CD4-positive, alpha-beta memory T cell (primary cell): ENCODE measurements at regions of chr4 and their contacts with region 1.

Region 1: DNA sequence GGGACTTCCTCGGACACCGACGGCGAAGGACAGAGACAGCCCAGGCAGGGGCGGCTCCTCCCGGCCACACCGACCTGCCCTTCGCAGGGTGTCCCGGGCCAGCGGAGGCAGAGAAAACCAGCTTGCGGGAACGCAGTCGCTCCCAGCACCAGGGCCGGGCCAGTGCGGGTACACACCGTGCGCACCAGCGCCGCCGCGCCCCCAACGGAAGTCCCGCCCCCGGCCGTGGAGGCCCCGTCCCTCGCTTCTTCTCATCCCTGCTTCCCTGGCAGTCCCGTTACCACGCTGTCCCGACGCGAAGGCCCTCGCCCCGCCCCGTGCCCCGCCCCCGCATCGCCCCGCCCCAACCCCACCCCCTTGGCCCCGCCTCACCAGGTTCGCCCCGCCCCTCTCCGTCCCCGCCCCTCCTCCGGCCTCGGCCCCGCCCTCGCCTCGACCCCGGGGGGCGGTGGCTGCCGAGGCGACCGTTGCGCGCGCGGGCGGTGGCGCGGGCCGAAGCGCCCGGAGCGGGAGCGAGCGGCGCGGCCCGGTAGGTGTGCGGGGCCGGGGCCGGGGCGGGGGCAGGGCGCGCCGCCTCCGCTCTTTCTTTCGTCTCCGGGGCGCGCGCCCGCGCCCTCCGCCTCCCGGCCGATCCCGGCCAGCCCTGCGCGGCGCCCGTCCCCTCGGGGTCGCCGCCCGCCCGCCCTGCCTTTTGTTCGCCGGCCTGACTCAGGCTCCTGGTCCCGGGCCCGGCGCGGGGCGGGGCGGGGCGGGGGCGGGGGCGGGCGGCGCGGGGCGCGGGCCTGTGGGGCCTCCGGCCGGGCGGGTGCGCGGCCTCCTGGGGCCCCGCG is at the start of gene RGS12:
- DNase-seq: peak; percentile 76 to 89 (median 78)
- H3K4me3 ChIP-seq: peak within 1 kb of the TSS; percentile 6 to 76
- H3K4me3 Mint-ChIP-seq: peak within 1 kb of the TSS; percentile 87 to 93 (median 92)
- H3K27ac ChIP-seq: peak within 1 kb of the TSS; percentile 52
- H3K27ac Mint-ChIP-seq: peak within 1 kb of the TSS; percentile 73 to 92 (median 84)
- H3K4me1 ChIP-seq: peaks cover 9% of the 10 kb centered on the region
- H3K4me1 Mint-ChIP-seq: peaks cover 10 to 29% (median 13%) of the 10 kb centered on the region in 4 donors
- H3K27me3 ChIP-seq: no peaks in the 10 kb centered on the region
- H3K27me3 Mint-ChIP-seq: peaks cover 3 to 4% of the 10 kb centered on the region in 2 donors
- total RNA-seq, gene RGS12: 9.7 to 10.6 TPM

Region 2: GRCh38 chr4:2008875-2009703 is 1283.7 kb before region 1 on chr4 and contains the start of gene NELFA:
- CTCF ChIA-PET with region 1: no interaction called
- POLR2A ChIA-PET with region 1: no interaction called
- intact Hi-C with region 1: loop called (anchors 5 kb)
- DNase-seq: peak; percentile 95 to 97 (median 97)
- H3K4me3 ChIP-seq: peak within 1 kb of the TSS; percentile 76 to 94
- H3K4me3 Mint-ChIP-seq: peak within 1 kb of the TSS; percentile 92 to 96 (median 94)
- H3K27ac ChIP-seq: peak within 1 kb of the TSS; percentile 95
- H3K27ac Mint-ChIP-seq: peak within 1 kb of the TSS; percentile 94 to 98 (median 97)
- H3K4me1 ChIP-seq: peaks cover 27% of the 10 kb centered on the region
- H3K4me1 Mint-ChIP-seq: peaks cover 29 to 42% (median 31%) of the 10 kb centered on the region in 4 donors
- H3K27me3 ChIP-seq: no peaks in the 10 kb centered on the region
- H3K27me3 Mint-ChIP-seq: no peaks in the 10 kb centered on the region
- total RNA-seq, gene NELFA: 47.0 to 48.3 TPM

Region 3: GRCh38 chr4:3201718-3202702 is 90.8 kb before region 1 on chr4:
- CTCF ChIA-PET with region 1: no interaction called
- POLR2A ChIA-PET with region 1: interaction called, 3 read pairs
- intact Hi-C with region 1: loop called (anchors 2 kb)
- DNase-seq: peak; percentile 83 to 89 (median 87)
- H3K4me3 ChIP-seq: peak overlapping the region in 1 of 2 donors; percentile 30
- H3K4me3 Mint-ChIP-seq: peak overlapping the region; percentile 21 to 84 (median 76)
- H3K27ac ChIP-seq: peak overlapping the region; percentile 3
- H3K27ac Mint-ChIP-seq: peak overlapping the region; percentile 38 to 86 (median 82)
- H3K4me1 ChIP-seq: peaks cover 54% of the 10 kb centered on the region
- H3K4me1 Mint-ChIP-seq: peaks cover 31 to 54% (median 40%) of the 10 kb centered on the region in 4 donors
- H3K27me3 ChIP-seq: no peaks in the 10 kb centered on the region
- H3K27me3 Mint-ChIP-seq: no peaks in the 10 kb centered on the region

Region 4: DNA sequence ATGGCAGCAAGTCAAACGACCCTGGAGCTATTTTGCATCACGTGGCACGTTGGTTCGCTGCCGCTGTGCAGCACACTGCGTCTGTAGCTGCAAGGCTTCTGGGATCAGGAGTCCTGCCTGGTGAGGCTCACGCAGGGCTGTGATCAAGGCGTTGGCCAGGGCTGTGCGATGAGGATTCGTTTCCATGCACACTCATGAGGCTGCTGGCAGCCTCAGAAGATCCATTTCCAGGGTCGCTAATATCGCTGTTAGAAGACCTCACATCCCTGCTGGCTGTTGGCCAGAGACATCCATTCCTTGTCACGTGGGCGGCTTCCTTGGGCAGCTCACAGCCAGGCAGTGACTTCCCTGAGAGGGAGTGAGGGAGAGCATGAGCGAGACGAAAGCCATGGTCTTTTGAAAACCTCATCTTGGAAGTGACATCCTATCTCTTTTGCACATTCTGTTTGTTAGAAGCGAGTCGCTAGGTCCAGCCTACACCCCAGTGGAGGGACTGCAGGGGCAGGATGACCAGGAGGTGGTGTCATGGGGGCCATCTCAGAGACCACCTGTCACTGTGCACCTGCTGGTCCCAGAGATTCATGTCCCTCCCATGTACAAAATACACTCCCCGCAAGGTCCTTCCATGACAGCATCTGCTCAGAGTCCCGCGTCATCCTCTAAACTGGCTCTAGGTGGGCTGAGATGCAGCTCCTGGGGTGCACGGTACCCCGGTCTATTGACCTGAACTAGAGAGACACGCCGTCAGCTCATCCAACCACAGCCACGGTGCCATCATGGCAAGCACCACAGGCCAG is 12.2 kb after region 1 on chr4:
- CTCF ChIA-PET with region 1: no interaction called
- POLR2A ChIA-PET with region 1: interaction called, 4 read pairs
- intact Hi-C with region 1: loop called (anchors 1 kb)
- DNase-seq: no peak
- H3K4me3 ChIP-seq: no peak overlapping the region
- H3K4me3 Mint-ChIP-seq: peak overlapping the region in 4 of 8 donors; percentile 49 to 62 (median 57)
- H3K27ac ChIP-seq: no peak overlapping the region
- H3K27ac Mint-ChIP-seq: peak overlapping the region in 5 of 7 donors; percentile 15 to 91 (median 75)
- H3K4me1 ChIP-seq: peaks cover 55% of the 10 kb centered on the region
- H3K4me1 Mint-ChIP-seq: peaks cover 36 to 56% (median 45%) of the 10 kb centered on the region in 4 donors
- H3K27me3 ChIP-seq: no peaks in the 10 kb centered on the region
- H3K27me3 Mint-ChIP-seq: peaks cover 0 to 2% of the 10 kb centered on the region in 2 donors

Region 5: GRCh38 chr4:4377732-4378460 is 1085.1 kb after region 1 on chr4:
- CTCF ChIA-PET with region 1: no interaction called
- POLR2A ChIA-PET with region 1: no interaction called
- intact Hi-C with region 1: no loop called
- DNase-seq: no peak
- H3K4me3 ChIP-seq: no peak overlapping the region
- H3K4me3 Mint-ChIP-seq: no peak overlapping the region
- H3K27ac ChIP-seq: no peak overlapping the region
- H3K27ac Mint-ChIP-seq: no peak overlapping the region
- H3K4me1 ChIP-seq: no peaks in the 10 kb centered on the region
- H3K4me1 Mint-ChIP-seq: no peaks in the 10 kb centered on the region
- H3K27me3 ChIP-seq: peaks cover 3% of the 10 kb centered on the region
- H3K27me3 Mint-ChIP-seq: peaks cover 0 to 5% of the 10 kb centered on the region in 2 donors